ENCODE measurements at regions of chr6 and their contacts with region 1.

Region 1: GRCh38 chr6:32118782-32119628 is 9.0 kb downstream of the ATF6B start:
- DNase-seq: peak; percentile 73 to 88
- H3K4me3 ChIP-seq: no peak overlapping the region
- H3K27ac ChIP-seq: no peak overlapping the region
- H3K4me1 ChIP-seq: peaks cover 0 to 2% (median 0%) of the 10 kb centered on the region in 4 experiments; a peak in 2 of 7 replicates
- H3K27me3 ChIP-seq: no peaks in the 10 kb centered on the region
- CTCF ChIP-seq: peak; percentile 94 to 96 (median 95)
- EP300 ChIP-seq: no peak
- POLR2A ChIP-seq: no peak
- RAD21 ChIP-seq: peak; percentile 92 to 94

Region 2: DNA sequence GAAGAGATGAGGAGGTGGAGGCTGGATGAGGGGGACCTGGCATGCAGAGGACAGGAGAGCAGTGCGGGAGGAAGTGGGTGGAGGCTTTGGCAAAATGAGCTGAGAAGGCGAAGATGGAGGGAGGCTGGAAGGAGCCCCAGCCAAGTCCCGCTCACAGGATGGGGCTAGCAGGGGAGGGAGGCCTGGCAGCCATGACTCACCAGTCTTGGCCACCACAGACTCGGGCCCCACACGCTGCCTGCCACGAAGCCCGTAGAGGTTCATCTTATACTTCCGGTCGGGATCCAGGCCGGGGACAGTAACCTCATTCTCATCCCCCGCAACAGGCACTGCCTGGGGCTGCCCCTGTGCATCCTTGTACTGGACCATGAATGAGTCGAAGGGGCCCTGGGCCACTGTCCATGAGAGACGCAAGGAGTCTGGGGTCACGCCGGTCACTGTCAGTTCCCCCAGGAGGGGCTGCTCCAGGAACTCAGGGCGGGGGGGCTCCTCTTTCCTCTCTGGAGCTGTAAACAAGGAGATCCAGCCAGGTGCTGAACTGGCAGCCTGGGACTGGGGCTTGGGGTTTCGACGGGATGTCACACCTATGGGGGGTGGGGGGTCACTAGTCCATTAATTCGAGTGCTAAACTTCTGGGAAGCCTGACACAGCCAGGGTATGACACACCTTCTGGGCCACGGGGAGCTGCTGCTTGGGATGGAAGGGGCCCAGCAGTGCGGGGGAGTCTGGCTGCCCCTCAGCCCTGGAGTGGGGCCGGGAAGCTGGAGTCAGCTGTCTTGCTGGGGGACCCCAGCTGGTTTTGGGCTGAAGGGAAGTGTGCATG is 37.6 kb before region 1 on chr6:
- CTCF ChIA-PET with region 1: interaction called, 30 read pairs
- POLR2A ChIA-PET with region 1: interaction called, 4 read pairs
- DNase-seq: no peak
- H3K4me3 ChIP-seq: no peak overlapping the region
- H3K27ac ChIP-seq: no peak overlapping the region
- H3K4me1 ChIP-seq: peaks cover 0 to 2% (median under 1%) of the 10 kb centered on the region in 4 experiments; a peak in 4 of 7 replicates
- H3K27me3 ChIP-seq: peaks cover 0 to 3% (median 3%) of the 10 kb centered on the region in 4 experiments; a peak in 4 of 7 replicates
- CTCF ChIP-seq: no peak
- EP300 ChIP-seq: no peak
- POLR2A ChIP-seq: no peak
- RAD21 ChIP-seq: no peak

Region 3: DNA sequence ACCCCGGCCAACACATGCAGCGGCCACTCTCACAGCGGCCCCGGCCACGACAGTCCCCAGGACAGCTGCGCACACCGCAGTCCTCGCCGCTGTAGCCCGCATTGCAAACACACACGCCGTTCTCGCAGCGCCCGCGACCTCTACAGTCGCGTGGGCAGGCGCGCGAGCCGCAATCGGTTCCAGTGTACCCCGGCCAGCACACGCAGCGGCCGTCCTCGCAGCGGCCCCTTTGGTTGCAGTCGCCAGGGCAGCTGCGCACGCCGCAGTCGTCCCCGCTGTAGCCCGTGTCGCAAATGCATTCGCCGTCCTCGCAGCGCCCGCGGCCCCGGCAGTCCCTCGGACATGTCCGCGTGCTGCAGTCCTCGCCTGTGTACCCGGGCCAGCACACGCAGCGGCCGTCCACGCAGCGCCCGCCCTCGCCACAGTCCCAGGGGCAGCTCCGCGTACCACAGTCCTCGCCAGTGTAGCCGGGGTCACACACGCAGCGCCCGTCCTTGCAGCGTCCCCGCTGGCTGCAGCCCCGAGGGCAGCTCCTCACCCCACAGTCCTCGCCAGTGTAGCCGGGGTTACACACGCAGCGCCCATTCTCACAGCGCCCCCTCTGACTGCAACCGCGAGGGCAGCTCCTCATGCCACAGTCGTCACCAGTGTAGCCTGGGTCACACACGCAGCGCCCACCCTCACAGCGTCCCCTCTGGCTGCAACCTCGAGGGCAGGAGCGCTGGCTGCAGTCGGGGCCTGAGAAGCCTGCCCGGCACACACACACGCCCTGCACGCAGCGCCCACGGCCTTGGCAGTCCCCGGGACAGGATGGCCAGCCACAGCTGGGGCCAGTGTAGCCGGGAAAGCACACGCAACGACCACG is 22.4 kb before region 1 on chr6:
- CTCF ChIA-PET with region 1: interaction called, 63 read pairs
- POLR2A ChIA-PET with region 1: no interaction called
- DNase-seq: peak in 1 of 2 experiments; percentile 66
- H3K4me3 ChIP-seq: no peak overlapping the region
- H3K27ac ChIP-seq: no peak overlapping the region
- H3K4me1 ChIP-seq: no peaks in the 10 kb centered on the region
- H3K27me3 ChIP-seq: peaks cover 0 to 7% (median 1%) of the 10 kb centered on the region in 4 experiments; a peak in 2 of 7 replicates
- CTCF ChIP-seq: peak; percentile 45 to 70 (median 66); a peak in 3 of 4 replicates
- EP300 ChIP-seq: no peak
- POLR2A ChIP-seq: no peak
- RAD21 ChIP-seq: peak; percentile 21 to 39; a peak in 3 of 4 replicates

Region 4: GRCh38 chr6:32153564-32154513 is 34.8 kb after region 1 on chr6 and contains the start of gene PPT2:
- CTCF ChIA-PET with region 1: interaction called, 19 read pairs
- POLR2A ChIA-PET with region 1: interaction called, 15 read pairs
- DNase-seq: peak; percentile 74 to 88
- H3K4me3 ChIP-seq: peak within 1 kb of the TSS; percentile 77 to 98 (median 92)
- H3K27ac ChIP-seq: peak within 1 kb of the TSS; percentile 70
- H3K4me1 ChIP-seq: peaks cover 10 to 28% (median 16%) of the 10 kb centered on the region in 4 experiments
- H3K27me3 ChIP-seq: peaks cover 4 to 40% (median 37%) of the 10 kb centered on the region in 4 experiments
- CTCF ChIP-seq: peak in 2 of 3 experiments; percentile 13 to 24; a peak in 3 of 4 replicates
- EP300 ChIP-seq: peak in 1 of 2 experiments; percentile 97; a peak in 2 of 3 replicates
- POLR2A ChIP-seq: peak in 1 of 2 experiments; percentile 71; a peak in 1 of 3 replicates
- RAD21 ChIP-seq: 0 out of 4 replicates have a peak, but pooled peaks of 1 of the 2 experiments have one; percentile 9
- total RNA-seq, gene PPT2: 24.1 and 27.9 TPM in 2 replicates

Region 5: DNA sequence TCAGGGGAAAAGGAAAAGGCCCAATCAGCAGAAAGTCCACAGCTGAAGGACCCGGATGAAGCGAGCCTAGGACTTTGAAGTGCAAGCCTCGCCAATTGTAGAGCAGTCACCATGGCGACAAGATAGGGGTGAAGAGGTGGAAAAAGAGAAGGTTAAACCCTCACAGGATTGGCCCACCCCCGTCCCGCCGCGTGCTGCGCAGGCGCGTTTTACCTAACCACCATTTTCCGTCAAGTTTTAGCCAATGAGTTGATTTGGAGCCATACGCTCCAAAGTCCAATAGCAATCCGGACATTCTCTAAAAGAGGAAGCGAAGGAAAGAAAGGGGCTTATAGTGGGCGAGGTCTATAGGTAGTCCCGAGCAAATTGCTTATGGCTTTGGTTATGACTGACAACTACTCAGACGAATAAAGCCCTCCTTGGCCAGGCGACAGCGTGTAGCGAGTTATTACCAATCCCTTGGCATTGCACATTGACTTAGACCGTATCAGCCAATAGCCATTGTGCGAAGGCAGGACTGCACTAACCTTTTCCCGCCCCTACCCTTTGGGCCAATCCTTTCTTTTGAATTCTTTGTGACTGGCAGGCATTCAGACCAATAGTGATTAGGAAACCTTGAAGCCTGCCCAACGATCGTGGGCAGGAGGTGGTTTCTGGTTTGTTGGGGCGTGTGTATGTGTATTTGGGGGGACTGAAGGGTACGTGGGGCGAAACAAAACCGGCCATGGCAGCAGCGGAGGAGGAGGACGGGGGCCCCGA is 59.0 kb after region 1 on chr6 and contains the start of gene RNF5:
- CTCF ChIA-PET with region 1: interaction called, 8 read pairs
- POLR2A ChIA-PET with region 1: interaction called, 10 read pairs
- DNase-seq: peak; percentile 82 to 91
- H3K4me3 ChIP-seq: peak within 1 kb of the TSS; percentile 91 to 99 (median 95)
- H3K27ac ChIP-seq: peak within 1 kb of the TSS; percentile 95
- H3K4me1 ChIP-seq: peaks cover 5 to 20% (median 9%) of the 10 kb centered on the region in 4 experiments; a peak in 6 of 7 replicates
- H3K27me3 ChIP-seq: no peaks in the 10 kb centered on the region; a peak in 1 of 7 replicates
- CTCF ChIP-seq: no peak
- EP300 ChIP-seq: no peak
- POLR2A ChIP-seq: peak in 1 of 2 experiments; percentile 71; a peak in 1 of 3 replicates
- RAD21 ChIP-seq: no peak
- total RNA-seq, gene RNF5: 90.0 and 90.3 TPM in 2 replicates